A673 (cell line): ENCODE measurements at regions of chr1 and their contacts with region 1.

Region 1: GRCh38 chr1:180515864-180516388 is 13.5 kb upstream of the ACBD6 start:
- DNase-seq: peak; percentile 86
- H3K4me3 ChIP-seq: no peak overlapping the region
- H3K27ac ChIP-seq: no peak overlapping the region
- H3K4me1 ChIP-seq: no peaks in the 10 kb centered on the region
- H3K27me3 ChIP-seq: no peaks in the 10 kb centered on the region
- CTCF ChIP-seq: peak; percentile 86

Region 2: DNA sequence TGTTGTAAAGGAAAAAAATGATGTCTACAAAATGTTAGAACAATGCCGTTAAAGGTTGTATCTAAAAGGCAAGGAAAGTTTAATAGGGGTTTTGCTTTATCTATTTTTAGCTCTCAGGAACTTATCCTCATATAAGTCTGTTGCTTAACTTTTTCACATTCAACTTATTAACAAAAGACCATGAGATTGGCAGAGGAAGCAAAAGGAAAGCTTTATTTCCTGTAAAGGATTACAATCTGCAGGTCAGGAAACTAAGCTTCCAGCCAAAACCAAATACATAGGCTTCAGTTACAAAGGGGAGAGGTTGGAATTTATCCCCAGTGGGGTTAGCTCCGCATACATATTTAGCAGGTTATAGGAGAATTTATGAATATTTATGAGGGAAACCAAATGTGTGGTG is 338.1 kb after region 1 on chr1:
- CTCF ChIA-PET with region 1: interaction called, 3 read pairs
- POLR2A ChIA-PET with region 1: interaction called, 11 read pairs
- intact Hi-C with region 1: no loop called
- DNase-seq: peak; percentile 89
- H3K4me3 ChIP-seq: peak overlapping the region; percentile 16
- H3K27ac ChIP-seq: peak overlapping the region; percentile 64
- H3K4me1 ChIP-seq: peaks cover 29% of the 10 kb centered on the region
- H3K27me3 ChIP-seq: no peaks in the 10 kb centered on the region
- CTCF ChIP-seq: no peak

Region 3: DNA sequence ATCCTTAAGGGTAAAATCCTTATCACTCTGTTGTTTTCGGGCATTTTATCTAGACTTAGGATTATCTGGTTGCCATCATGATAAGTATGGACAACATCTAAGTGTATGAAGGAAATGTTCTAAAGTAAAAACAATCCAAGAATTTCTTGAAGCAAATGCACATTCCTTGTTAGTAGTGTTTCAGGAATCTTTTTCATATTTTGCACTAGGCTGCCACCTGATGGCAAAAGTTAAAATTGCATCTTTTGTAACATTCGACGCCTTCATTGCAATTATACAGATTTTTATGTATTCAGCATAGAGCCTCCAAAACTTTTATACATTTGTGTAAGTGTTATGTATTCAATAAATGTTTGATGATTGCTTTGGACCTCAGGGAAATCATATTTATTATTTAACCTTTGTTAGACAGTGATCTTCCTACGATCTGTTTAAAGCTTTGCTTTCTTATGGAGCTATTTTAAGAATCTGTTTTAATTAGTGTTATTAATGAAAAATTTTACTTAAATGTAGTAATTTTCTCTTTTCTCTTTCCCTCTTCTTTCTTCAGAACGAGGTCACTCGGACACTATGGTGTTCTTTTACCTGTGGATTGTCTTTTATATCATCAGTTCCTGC is 347.3 kb after region 1 on chr1:
- CTCF ChIA-PET with region 1: interaction called, 17 read pairs
- POLR2A ChIA-PET with region 1: no interaction called
- intact Hi-C with region 1: loop called (anchors 5 kb)
- DNase-seq: peak; percentile 75
- H3K4me3 ChIP-seq: no peak overlapping the region
- H3K27ac ChIP-seq: no peak overlapping the region
- H3K4me1 ChIP-seq: no peaks in the 10 kb centered on the region
- H3K27me3 ChIP-seq: no peaks in the 10 kb centered on the region
- CTCF ChIP-seq: peak; percentile 76

Region 4: DNA sequence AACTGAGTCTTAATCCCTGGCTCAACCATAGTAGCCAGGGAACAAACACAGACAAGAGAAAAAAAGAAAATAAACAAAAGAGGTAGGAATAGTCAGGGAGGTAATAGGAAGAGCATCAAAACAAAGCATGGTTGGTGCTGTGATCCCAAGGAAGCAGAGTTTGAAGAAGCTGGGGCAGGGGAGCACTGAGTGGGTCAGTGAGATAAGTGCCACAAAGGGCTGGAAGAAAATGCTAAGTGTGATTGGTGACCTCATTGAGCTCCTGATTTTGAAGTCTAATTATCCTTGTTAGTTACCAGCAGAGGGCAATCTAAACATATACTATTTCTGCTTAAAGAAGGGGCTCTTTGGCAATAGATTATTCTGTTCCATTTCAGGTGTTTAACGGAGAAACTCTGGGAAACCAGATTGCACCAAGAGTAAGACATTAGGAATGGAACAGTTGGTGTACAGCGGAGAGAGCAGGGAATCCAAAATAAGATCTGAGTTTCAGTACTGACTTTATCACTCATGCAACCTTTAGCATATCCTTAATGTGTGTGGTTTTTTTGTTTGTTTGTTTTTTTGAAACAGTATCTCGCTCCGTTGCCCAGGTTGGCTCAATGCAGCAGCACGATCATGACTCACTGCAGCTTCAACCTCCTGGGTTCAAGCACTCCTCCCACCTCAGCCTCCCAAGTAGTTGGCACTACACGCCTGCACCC is 366.0 kb after region 1 on chr1:
- CTCF ChIA-PET with region 1: interaction called, 4 read pairs
- POLR2A ChIA-PET with region 1: no interaction called
- intact Hi-C with region 1: loop called (anchors 5 kb)
- DNase-seq: peak; percentile 63
- H3K4me3 ChIP-seq: no peak overlapping the region
- H3K27ac ChIP-seq: no peak overlapping the region
- H3K4me1 ChIP-seq: no peaks in the 10 kb centered on the region
- H3K27me3 ChIP-seq: no peaks in the 10 kb centered on the region
- CTCF ChIP-seq: peak; percentile 55

Region 5: DNA sequence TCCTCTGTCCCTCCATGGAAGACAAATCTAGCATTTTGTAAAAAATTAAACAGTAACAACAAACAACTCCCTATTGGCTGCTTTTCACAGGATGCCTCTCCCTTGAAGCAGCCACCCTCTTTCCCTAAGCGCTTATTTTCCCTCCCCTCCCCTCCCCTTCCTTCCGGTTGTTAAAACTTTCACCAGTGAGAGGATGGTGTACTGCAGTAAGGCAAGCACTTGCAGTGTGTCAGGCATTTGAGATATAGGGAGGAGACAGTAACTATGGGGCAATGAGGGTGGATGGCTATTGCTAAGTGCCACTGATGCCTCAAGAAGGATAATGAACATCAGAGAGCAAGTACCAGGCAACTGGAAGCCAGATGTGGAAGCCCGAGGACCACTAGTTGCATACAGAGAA is 377.7 kb after region 1 on chr1:
- CTCF ChIA-PET with region 1: interaction called, 18 read pairs
- POLR2A ChIA-PET with region 1: no interaction called
- intact Hi-C with region 1: no loop called
- DNase-seq: peak; percentile 30
- H3K4me3 ChIP-seq: no peak overlapping the region
- H3K27ac ChIP-seq: no peak overlapping the region
- H3K4me1 ChIP-seq: no peaks in the 10 kb centered on the region
- H3K27me3 ChIP-seq: no peaks in the 10 kb centered on the region
- CTCF ChIP-seq: no peak

Region 6: DNA sequence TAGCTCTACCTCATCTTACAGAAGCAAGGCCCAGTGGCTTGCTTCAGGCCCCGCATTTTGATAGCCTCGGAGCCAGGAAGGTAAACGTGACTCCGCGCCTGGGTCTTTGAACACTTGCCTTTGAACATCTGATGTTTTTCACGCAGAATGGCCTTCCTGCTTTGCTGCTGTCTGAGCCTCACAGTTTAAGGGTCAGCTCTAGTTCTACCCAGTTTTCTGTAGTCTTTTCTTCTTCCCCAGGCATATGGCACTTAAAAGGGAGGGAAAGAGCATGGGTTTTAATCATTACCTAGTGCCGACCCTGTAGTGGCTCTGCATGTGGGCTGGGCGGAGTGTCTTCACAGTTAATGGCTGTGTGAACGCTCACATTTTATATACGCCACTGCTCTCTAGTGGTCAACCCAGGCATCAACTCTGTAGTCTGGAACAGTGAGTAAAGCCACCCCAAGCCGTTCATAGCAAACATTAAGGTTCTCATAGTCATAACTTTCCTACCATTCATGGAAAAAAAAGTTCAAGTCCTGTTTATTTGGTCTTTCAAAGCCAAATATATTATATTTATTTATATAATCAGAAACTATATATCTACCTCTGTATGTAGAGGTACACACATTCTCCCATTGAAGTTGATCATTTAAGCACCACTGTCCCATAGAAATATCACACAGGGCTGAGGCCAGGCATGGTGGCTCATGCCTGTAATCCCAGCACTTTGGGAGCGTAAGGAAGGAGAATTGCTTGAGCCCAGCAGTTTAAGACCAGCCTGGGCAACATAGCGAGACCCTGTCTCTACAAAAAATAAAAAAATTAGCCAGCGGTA is 650.7 kb after region 1 on chr1:
- CTCF ChIA-PET with region 1: no interaction called
- POLR2A ChIA-PET with region 1: no interaction called
- intact Hi-C with region 1: loop called (anchors 5 kb)
- DNase-seq: peak; percentile 89
- H3K4me3 ChIP-seq: no peak overlapping the region
- H3K27ac ChIP-seq: no peak overlapping the region
- H3K4me1 ChIP-seq: peaks cover 2% of the 10 kb centered on the region
- H3K27me3 ChIP-seq: no peaks in the 10 kb centered on the region
- CTCF ChIP-seq: peak; percentile 87

Region 7: DNA sequence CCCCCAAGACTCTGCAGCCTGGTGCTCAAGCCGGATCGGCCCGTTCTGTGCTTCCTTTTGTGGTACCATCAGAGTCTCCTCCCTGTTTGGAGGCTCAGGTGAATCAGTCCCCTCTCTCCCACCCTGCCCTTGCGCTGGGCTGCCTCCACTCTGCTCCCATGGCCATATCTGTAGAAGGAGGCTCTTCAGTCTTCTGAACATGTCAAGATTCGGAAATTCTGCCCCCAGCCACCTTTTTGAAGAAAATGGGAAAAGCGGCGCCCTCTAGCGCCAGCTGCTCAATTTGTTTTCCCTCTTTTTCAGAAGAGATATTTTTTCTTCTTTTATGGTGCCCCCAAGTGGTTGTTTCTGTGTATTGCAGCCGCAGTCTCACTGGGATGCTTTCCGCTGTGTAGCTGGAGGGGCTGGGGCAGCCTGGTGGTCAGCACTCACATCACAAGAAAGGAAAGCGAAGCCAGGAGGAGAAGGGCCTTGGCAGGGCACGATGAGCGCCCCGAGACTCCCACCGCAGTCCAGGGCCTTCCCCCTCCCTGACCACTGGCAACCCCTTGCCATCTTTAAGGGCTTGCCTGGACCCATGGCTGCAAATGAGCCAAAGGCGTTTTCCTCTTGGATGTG is 909.0 kb after region 1 on chr1:
- CTCF ChIA-PET with region 1: interaction called, 4 read pairs
- POLR2A ChIA-PET with region 1: no interaction called
- intact Hi-C with region 1: loop called (anchors 10 kb)
- DNase-seq: peak; percentile 88
- H3K4me3 ChIP-seq: no peak overlapping the region
- H3K27ac ChIP-seq: no peak overlapping the region
- H3K4me1 ChIP-seq: no peaks in the 10 kb centered on the region
- H3K27me3 ChIP-seq: peaks cover 17% of the 10 kb centered on the region
- CTCF ChIP-seq: peak; percentile 99